ENCODE measurements at regions of chr2 and their contacts with region 1.

Region 1: GRCh38 chr2:39913648-39914461 is 134.8 kb upstream of the THUMPD2 start:
- DNase-seq: no peak
- ATAC-seq: peak; percentile 77

Region 2: GRCh38 chr2:40554668-40555285 is 640.9 kb after region 1 on chr2:
- intact Hi-C with region 1: loop called (anchors 10 kb)
- DNase-seq: peak; percentile 33
- ATAC-seq: peak; percentile 76

Region 3: GRCh38 chr2:40760071-40760666 is 846.3 kb after region 1 on chr2:
- intact Hi-C with region 1: loop called (anchors 5 kb)
- DNase-seq: peak; percentile 26
- ATAC-seq: peak; percentile 93